ENCODE measurements at regions of chr17 and their contacts with region 1.

Region 1: DNA sequence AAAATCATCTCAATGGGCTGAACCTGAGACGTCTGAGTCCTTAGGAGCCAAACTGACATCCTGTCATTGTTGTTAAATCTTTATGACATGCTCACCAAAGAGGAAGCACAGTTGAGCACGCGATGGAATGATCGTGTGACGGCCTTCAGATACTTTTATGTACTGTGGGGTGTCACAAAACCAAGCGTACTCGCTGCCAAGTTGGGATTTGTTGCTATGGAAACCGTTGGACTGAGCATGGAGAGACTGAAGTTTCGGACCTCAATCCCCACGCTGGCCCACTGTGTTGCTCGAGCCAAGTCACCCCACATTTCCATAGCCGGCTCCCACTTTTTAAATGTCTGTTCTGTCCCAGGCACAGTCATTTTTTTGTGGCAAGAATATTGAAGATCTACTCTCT is 222.8 kb upstream of the SDK2 start:
- DNase-seq: no peak
- ATAC-seq: no peak
- H3K4me3 ChIP-seq: no peak overlapping the region
- H3K27ac ChIP-seq: no peak overlapping the region
- H3K4me1 ChIP-seq: no peaks in the 10 kb centered on the region
- H3K27me3 ChIP-seq: peaks cover 0 to 12% (median 0%) of the 10 kb centered on the region in 9 donors
- CTCF ChIP-seq: no peak
- POLR2A ChIP-seq: no peak

Region 2: GRCh38 chr17:73803964-73804435 is 63.1 kb before region 1 on chr17:
- intact Hi-C with region 1: loop called in 1 of 10 experiments (anchors 10 kb)
- DNase-seq: no peak
- ATAC-seq: no peak
- H3K4me3 ChIP-seq: no peak overlapping the region
- H3K27ac ChIP-seq: no peak overlapping the region
- H3K4me1 ChIP-seq: no peaks in the 10 kb centered on the region
- H3K27me3 ChIP-seq: peaks cover 0 to 16% (median 6%) of the 10 kb centered on the region in 9 donors
- CTCF ChIP-seq: no peak
- POLR2A ChIP-seq: no peak

Region 3: DNA sequence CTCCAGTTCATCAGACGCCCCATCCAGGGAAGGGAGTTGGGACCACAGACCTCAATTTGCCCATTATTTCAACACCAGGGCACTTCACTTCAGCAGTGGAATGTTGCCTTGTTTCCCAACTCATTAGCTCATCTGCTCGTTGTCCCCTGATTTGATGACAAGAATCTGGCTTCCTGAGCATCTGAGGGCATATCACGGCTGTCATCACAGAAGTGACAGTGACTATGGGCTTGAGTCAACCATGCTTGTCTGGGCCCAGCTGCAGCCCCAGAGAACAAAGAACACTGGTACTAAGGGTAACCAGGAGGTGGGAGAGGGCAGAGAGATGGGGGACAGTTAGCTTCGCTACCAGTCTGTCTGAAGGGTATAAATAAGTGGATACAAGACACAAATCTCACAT is 43.1 kb after region 1 on chr17:
- intact Hi-C with region 1: no loop called
- DNase-seq: no peak
- ATAC-seq: no peak
- H3K4me3 ChIP-seq: no peak overlapping the region
- H3K27ac ChIP-seq: no peak overlapping the region
- H3K4me1 ChIP-seq: no peaks in the 10 kb centered on the region
- H3K27me3 ChIP-seq: peaks cover 0 to 87% (median 16%) of the 10 kb centered on the region in 9 donors
- CTCF ChIP-seq: no peak
- POLR2A ChIP-seq: no peak

Region 4: GRCh38 chr17:73998653-73999645 is 131.9 kb after region 1 on chr17:
- intact Hi-C with region 1: no loop called
- DNase-seq: peak in 2 of 5 donors; percentile 46 to 62
- ATAC-seq: peak in 3 of 4 donors; percentile 42 to 74 (median 45)
- H3K4me3 ChIP-seq: peak overlapping the region in 4 of 12 donors; percentile 9 to 36 (median 23)
- H3K27ac ChIP-seq: no peak overlapping the region
- H3K4me1 ChIP-seq: no peaks in the 10 kb centered on the region
- H3K27me3 ChIP-seq: peaks cover 0 to 39% (median 2%) of the 10 kb centered on the region in 9 donors
- CTCF ChIP-seq: peak; percentile 41 to 68 (median 58)
- POLR2A ChIP-seq: no peak

Measured in heart left ventricle (tissue), 16 donors.